Gastrocnemius medialis (tissue), 4 donors: ENCODE measurements at regions of chr18 and their contacts with region 1.

Region 1: GRCh38 chr18:34707670-34708069 is 2.4 kb upstream of the DTNA start:
- DNase-seq: peak; percentile 50 to 57
- ATAC-seq: peak; percentile 61 to 72
- H3K4me3 ChIP-seq: peak overlapping the region in 3 of 4 donors; percentile 0 to 22 (median 14)
- H3K27ac ChIP-seq: peak overlapping the region; percentile 59 to 82 (median 78)
- H3K4me1 ChIP-seq: peaks cover 44 to 51% of the 10 kb centered on the region in 2 donors
- H3K27me3 ChIP-seq: no peaks in the 10 kb centered on the region
- CTCF ChIP-seq: no peak
- POLR2A ChIP-seq: no peak

Region 2: GRCh38 chr18:34122724-34123334 is 584.8 kb before region 1 on chr18:
- in situ Hi-C with region 1: no loop called
- intact Hi-C with region 1: no loop called
- DNase-seq: peak in 1 of 2 donors; percentile 12
- ATAC-seq: peak; percentile 42 to 69
- H3K4me3 ChIP-seq: no peak overlapping the region
- H3K27ac ChIP-seq: no peak overlapping the region
- H3K4me1 ChIP-seq: no peaks in the 10 kb centered on the region
- H3K27me3 ChIP-seq: no peaks in the 10 kb centered on the region
- CTCF ChIP-seq: peak; percentile 47 to 78 (median 71)
- POLR2A ChIP-seq: no peak

Region 3: GRCh38 chr18:34837769-34838272 is 130.2 kb after region 1 on chr18:
- in situ Hi-C with region 1: no loop called
- intact Hi-C with region 1: loop called (anchors 5 kb)
- DNase-seq: peak; percentile 40 to 60
- ATAC-seq: peak; percentile 86 to 90
- H3K4me3 ChIP-seq: peak overlapping the region; percentile 22 to 38 (median 32)
- H3K27ac ChIP-seq: peak overlapping the region; percentile 82 to 89 (median 86)
- H3K4me1 ChIP-seq: peaks cover 47 to 56% of the 10 kb centered on the region in 2 donors
- H3K27me3 ChIP-seq: no peaks in the 10 kb centered on the region
- CTCF ChIP-seq: no peak
- POLR2A ChIP-seq: no peak